ENCODE measurements at regions of chr14 and their contacts with region 1.

Region 1: DNA sequence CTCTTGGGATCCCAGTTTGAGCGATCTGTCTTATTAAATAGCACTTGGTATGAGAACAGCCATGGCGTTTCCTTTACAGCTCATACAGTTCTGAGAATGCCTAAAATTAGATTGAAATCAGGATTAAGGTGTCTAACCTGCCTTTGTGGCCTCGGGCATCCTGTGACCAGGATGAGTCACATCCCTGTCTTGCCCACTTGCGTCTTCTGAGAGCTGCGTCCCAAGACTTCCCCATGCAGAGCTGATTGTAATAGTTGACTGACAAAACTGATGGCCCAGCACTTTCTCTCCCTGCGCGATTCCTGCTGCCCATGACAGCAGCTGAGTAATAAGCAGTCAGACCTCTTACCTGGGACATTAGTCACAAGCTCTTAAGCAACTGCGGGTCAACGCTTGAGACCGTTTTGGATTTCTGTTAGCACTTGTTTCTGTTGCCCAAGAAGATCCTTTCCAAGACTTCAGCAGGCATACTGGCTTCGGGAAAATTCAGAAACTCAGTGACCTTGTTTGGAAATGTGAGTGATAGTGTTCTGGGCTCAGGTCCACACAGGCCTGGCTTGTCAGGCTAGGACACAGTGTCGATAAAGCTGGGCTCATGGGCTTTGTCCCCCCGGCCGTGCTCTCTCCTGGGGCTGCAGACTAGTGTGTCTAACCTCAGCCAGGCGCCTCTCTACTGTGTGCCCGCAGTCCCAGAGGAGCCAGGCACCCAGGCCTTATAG is 169.9 kb upstream of the HIF1A start:
- DNase-seq: peak; percentile 87
- H3K4me3 Mint-ChIP-seq: peak overlapping the region; percentile 40
- H3K27ac Mint-ChIP-seq: peak overlapping the region; percentile 72
- H3K4me1 Mint-ChIP-seq: peaks cover 82% of the 10 kb centered on the region
- H3K27me3 Mint-ChIP-seq: no peaks in the 10 kb centered on the region

Region 2: DNA sequence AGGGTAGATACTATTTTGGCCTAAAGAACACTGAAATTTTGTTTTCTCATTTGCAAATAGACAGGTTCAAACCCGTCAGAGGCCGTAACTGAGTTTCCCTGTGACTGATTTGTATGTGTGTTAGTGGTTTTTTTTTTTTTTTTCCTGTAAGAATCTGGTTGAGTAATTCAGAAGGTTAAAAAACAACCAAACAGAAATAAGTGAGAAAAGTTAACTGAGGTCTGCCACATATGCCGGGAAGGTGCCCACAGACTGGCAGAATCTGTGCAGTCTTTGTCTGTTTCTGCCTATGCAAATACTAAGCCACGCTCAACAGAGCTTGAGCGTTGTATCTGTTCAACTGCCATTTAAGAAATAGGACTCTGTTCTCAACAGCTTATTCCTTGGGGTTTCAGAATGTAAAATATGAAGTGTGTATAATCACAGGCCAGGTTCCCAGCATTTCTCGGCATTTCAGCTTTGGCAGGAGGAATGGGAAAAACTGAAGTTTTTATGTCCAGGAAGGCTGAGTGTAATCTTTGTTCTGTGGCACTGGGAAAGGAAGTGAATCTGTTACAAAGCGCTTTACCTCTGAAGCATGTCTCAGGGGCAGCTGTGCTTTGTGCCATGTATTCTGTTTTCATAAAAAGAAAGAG is 22.2 kb before region 1 on chr14:
- CTCF ChIA-PET with region 1: interaction called, 7 read pairs
- POLR2A ChIA-PET with region 1: interaction called, 19 read pairs
- DNase-seq: peak; percentile 80
- H3K4me3 Mint-ChIP-seq: peak overlapping the region; percentile 62
- H3K27ac Mint-ChIP-seq: peak overlapping the region; percentile 95
- H3K4me1 Mint-ChIP-seq: peaks cover 75% of the 10 kb centered on the region
- H3K27me3 Mint-ChIP-seq: no peaks in the 10 kb centered on the region

Region 3: GRCh38 chr14:61553725-61554641 is 28.5 kb after region 1 on chr14:
- CTCF ChIA-PET with region 1: interaction called, 3 read pairs
- POLR2A ChIA-PET with region 1: interaction called, 12 read pairs
- DNase-seq: no peak
- H3K4me3 Mint-ChIP-seq: no peak overlapping the region
- H3K27ac Mint-ChIP-seq: peak overlapping the region; percentile 90
- H3K4me1 Mint-ChIP-seq: peaks cover 46% of the 10 kb centered on the region
- H3K27me3 Mint-ChIP-seq: no peaks in the 10 kb centered on the region

Region 4: GRCh38 chr14:61761959-61762786 is 236.7 kb after region 1 on chr14 and contains the start of gene SNAPC1:
- CTCF ChIA-PET with region 1: no interaction called
- POLR2A ChIA-PET with region 1: interaction called, 11 read pairs
- DNase-seq: peak; percentile 98
- H3K4me3 Mint-ChIP-seq: peak within 1 kb of the TSS; percentile 98
- H3K27ac Mint-ChIP-seq: peak within 1 kb of the TSS; percentile 96
- H3K4me1 Mint-ChIP-seq: peaks cover 50% of the 10 kb centered on the region
- H3K27me3 Mint-ChIP-seq: peaks cover 4% of the 10 kb centered on the region
- total RNA-seq, gene SNAPC1: 5.5 to 6.0 TPM

Region 5: GRCh38 chr14:62189698-62190097 is 664.2 kb after region 1 on chr14:
- CTCF ChIA-PET with region 1: no interaction called
- POLR2A ChIA-PET with region 1: no interaction called
- DNase-seq: no peak
- H3K4me3 Mint-ChIP-seq: no peak overlapping the region
- H3K27ac Mint-ChIP-seq: no peak overlapping the region
- H3K4me1 Mint-ChIP-seq: no peaks in the 10 kb centered on the region
- H3K27me3 Mint-ChIP-seq: peaks cover 6% of the 10 kb centered on the region

Measured in activated CD4-positive, alpha-beta memory T cell treated with anti-CD3 and anti-CD28 coated beads, Interleukin-2, amount 10 ng/mL, durations not matched to agents 7 days and 5 days (primary cell).